Heart right ventricle (tissue), 16 donors: ENCODE measurements at regions of chr5 and their contacts with region 1.

Region 1: DNA sequence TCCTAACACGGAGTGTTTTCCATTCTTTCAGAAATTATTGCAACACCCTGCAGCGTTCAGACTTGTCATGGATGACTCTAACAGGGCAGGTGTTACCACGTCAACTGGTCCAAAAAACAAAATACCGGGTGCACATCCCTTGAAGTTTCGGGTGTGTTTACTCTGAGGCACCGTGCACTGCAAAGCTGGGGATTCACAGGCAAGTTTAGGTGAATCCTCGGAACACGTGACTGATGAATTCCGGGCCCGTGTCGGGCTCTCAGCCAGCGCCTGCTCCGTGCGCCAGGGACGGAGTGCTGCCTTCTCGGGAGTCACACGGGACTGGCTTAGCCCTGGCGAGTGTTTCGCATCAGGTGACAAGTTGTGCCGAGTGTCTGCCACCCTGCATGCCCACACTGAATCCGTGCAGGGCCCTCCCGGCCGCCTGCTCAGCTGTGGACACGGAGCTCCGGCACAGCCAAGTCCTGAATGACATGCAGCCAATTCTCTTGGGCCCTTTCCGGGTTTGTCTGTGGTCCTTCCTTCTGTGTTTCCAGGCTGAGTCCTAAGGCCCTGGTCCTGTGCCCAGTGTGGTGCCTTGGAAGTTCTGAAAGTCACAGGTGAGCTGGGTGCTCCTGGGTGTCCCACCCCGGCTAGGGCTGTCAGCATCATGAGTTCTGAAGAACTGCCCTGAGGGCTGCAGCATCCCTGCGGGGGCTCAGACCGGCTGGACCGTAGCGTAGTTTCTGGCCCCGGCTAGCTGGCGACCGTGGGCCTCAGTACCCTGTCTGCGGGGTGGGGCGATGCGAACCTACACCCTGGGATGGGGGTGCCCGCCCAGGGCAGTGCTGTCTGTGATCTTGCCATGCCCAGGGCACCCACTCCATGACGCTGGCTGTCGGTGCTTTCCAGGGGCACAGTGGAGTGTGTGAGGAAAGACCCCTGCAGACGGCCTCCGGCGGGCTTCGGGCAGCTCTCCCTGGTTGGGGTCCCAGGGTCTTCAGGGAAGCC is 66.2 kb upstream of the IRX4 start:
- DNase-seq: peak; percentile 72 to 80
- ATAC-seq: peak; percentile 79 to 94 (median 90)
- H3K4me3 ChIP-seq: peak overlapping the region in 6 of 10 donors; percentile 10 to 26 (median 18)
- H3K27ac ChIP-seq: peak overlapping the region in 9 of 10 donors; percentile 5 to 71 (median 42)
- H3K4me1 ChIP-seq: peaks cover 0 to 34% (median 23%) of the 10 kb centered on the region in 9 donors
- H3K27me3 ChIP-seq: peaks cover 0 to 17% (median 0%) of the 10 kb centered on the region in 7 donors
- CTCF ChIP-seq: no peak

Region 2: DNA sequence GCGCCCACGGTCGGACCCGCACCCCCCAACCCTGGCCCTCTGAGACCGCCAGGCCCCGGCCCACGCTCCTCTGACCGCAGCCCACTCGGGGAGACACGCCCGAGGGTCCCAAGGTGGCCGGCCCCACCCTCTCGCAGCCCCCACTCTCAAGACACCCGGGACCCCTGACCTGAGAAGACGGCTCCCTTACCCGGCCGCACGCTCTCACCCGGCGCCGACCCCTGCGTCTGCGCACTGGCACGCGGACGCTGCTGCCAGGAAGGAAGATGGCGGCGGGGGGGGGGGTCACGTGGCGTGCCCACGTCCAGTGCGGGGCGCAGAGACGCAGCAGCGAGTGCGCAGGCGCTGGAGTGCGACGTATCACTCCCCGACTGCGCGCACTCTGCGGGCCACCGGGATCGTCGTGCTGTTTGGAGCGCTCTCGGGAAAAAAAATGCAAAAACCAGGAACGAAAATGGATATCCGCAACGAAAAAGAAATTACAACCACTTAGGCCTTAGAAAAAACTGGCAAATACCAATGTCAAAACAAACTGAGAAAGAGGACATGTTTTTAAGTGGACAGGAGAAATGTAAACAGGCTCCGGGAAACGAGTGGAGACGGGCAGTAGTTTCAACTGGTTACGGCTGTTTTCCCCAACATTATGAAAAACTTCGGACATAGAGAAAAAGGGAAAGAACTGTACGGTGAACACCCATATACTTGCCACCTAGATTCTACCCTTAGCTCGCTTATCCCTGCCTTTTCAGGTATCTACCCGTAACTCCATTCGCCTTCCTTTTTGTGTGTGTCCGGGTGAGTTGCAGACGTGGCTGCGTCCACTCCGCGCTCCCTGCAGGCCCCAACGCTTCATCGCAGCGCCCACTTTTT is 149.1 kb before region 1 on chr5 and contains the start of gene MRPL36:
- intact Hi-C with region 1: loop called in 1 of 10 experiments (anchors 5 kb)
- DNase-seq: peak; percentile 94 to 96
- ATAC-seq: peak; percentile 86 to 96 (median 94)
- H3K4me3 ChIP-seq: peak within 1 kb of the TSS; percentile 75 to 100 (median 92)
- H3K27ac ChIP-seq: peak within 1 kb of the TSS; percentile 60 to 98 (median 92)
- H3K4me1 ChIP-seq: peaks cover 4 to 61% (median 39%) of the 10 kb centered on the region in 9 donors
- H3K27me3 ChIP-seq: no peaks in the 10 kb centered on the region
- CTCF ChIP-seq: peak in 1 of 9 donors; percentile 8
- total RNA-seq, gene MRPL36: 43.4 to 76.9 (median 49.8) TPM

Region 3: GRCh38 chr5:2017540-2018389 is 68.8 kb after region 1 on chr5:
- intact Hi-C with region 1: loop called in 1 of 10 experiments (anchors 5 kb)
- DNase-seq: no peak
- ATAC-seq: no peak
- H3K4me3 ChIP-seq: no peak overlapping the region
- H3K27ac ChIP-seq: no peak overlapping the region
- H3K4me1 ChIP-seq: peaks cover 0 to 13% (median 0%) of the 10 kb centered on the region in 9 donors
- H3K27me3 ChIP-seq: peaks cover 0 to 7% (median 0%) of the 10 kb centered on the region in 7 donors
- CTCF ChIP-seq: peak in 7 of 9 donors; percentile 24 to 49 (median 35)